CD8-positive, alpha-beta T cell (primary cell): ENCODE measurements at regions of chr16 and their contacts with region 1.

Region 1: DNA sequence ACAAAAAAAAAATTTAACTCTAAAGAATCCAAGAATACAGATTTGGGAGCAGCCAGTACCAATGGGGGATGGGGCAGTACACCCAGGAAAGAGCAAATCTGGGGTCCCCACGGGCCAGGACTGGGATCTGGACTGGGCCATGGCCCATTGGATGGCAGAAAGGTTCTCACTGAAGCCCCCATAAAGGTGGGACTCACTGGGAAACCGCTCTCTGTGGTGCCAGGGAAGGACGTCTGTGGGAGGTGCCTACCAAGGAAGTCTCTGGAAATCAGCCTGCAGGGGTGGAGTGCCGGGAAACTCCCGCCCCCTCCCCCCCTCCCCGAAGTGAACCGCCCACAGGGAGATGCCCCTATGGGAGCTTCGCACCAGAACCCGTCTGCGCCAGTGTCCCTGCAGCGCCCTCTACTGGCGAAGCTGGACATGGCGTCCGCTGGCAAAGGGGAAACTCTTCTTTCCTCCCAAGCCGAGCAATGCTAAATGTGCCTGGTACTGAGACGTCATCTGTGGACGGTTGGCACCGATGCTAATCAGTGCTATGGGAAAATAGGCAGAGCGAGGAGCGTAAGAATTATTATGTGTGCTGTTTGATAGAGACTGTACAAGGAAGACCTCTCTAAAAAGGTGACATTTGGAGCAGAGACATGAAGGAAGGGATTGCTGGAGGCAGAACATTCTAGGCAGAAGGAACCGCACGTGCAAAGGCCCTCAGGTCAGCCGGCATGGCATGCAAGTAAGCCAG is 671.1 kb downstream of the WWOX start:
- DNase-seq: peak; percentile 66 to 87 (median 78)
- ATAC-seq: peak; percentile 78
- H3K4me3 ChIP-seq: no peak overlapping the region
- H3K4me3 Mint-ChIP-seq: no peak overlapping the region
- H3K27ac ChIP-seq: peak overlapping the region in 1 of 2 experiments; percentile 12
- H3K27ac Mint-ChIP-seq: peak overlapping the region; percentile 66
- H3K4me1 ChIP-seq: peaks cover 5% of the 10 kb centered on the region
- H3K4me1 Mint-ChIP-seq: peaks cover 16% of the 10 kb centered on the region
- H3K27me3 ChIP-seq: no peaks in the 10 kb centered on the region
- H3K27me3 Mint-ChIP-seq: peaks cover 3% of the 10 kb centered on the region
- CTCF ChIP-seq: peak; percentile 95

Region 2: DNA sequence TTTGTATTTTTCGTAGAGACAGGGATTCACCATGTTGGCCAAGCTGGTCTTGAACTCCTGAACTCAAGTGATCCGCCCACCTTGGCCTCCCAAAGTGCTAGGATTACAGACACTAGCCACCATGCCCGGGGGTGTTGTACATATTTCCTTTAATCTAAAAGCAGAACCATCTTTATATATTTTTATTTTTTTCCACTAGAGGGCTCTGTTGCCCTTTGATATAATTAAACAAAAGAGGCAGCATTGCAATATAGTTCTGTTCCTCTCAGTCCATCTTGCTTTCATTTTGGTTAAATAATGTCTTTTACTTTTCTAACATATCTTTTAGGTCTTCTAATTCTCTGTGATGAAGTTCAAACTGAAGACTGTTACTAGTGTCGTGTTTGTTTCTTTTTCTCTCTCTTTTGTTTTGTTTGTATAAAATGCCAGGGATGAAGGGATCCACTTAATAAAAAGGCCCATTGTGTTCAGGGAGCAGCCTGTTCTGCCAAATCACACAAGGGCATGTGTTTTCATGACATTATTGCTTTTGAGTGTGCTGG is 647.7 kb before region 1 on chr16:
- CTCF ChIA-PET with region 1: no interaction called
- POLR2A ChIA-PET with region 1: no interaction called
- intact Hi-C with region 1: loop called in 1 of 2 experiments (anchors 1 kb)
- DNase-seq: peak in 3 of 9 experiments; percentile 9 to 63 (median 49)
- ATAC-seq: peak; percentile 49
- H3K4me3 ChIP-seq: no peak overlapping the region
- H3K4me3 Mint-ChIP-seq: no peak overlapping the region
- H3K27ac ChIP-seq: no peak overlapping the region
- H3K27ac Mint-ChIP-seq: no peak overlapping the region
- H3K4me1 ChIP-seq: no peaks in the 10 kb centered on the region
- H3K4me1 Mint-ChIP-seq: peaks cover 3% of the 10 kb centered on the region
- H3K27me3 ChIP-seq: no peaks in the 10 kb centered on the region
- H3K27me3 Mint-ChIP-seq: no peaks in the 10 kb centered on the region
- CTCF ChIP-seq: peak; percentile 70

Region 3: GRCh38 chr16:78503602-78504001 is 266.9 kb before region 1 on chr16:
- CTCF ChIA-PET with region 1: interaction called, 4 read pairs
- POLR2A ChIA-PET with region 1: no interaction called
- intact Hi-C with region 1: loop called in 1 of 2 experiments (anchors 1 kb)
- DNase-seq: peak in 5 of 9 experiments; percentile 16 to 65 (median 38)
- ATAC-seq: no peak
- H3K4me3 ChIP-seq: no peak overlapping the region
- H3K4me3 Mint-ChIP-seq: no peak overlapping the region
- H3K27ac ChIP-seq: no peak overlapping the region
- H3K27ac Mint-ChIP-seq: no peak overlapping the region
- H3K4me1 ChIP-seq: no peaks in the 10 kb centered on the region
- H3K4me1 Mint-ChIP-seq: no peaks in the 10 kb centered on the region
- H3K27me3 ChIP-seq: no peaks in the 10 kb centered on the region
- H3K27me3 Mint-ChIP-seq: no peaks in the 10 kb centered on the region
- CTCF ChIP-seq: peak; percentile 78

Region 4: DNA sequence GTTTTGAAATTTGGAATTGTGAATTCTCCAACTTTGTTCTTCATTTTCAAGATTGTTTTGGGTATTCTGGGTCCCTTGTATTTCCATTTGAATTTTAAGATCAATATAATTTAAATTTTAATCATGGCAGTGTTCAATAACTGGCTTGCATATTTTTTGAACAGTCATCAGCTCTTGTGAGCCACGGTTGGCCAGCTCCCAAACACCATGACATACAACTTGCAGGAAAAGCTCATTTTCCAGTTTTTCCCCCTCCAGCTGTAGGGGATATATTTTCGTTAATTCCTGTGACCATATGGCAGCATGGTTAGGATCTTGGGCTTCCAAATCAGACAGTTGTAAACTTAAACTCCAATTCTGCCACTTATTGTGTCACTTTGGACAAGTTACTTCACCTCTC is 19.0 kb after region 1 on chr16:
- CTCF ChIA-PET with region 1: no interaction called
- POLR2A ChIA-PET with region 1: no interaction called
- intact Hi-C with region 1: no loop called
- DNase-seq: no peak
- ATAC-seq: no peak
- H3K4me3 ChIP-seq: no peak overlapping the region
- H3K4me3 Mint-ChIP-seq: no peak overlapping the region
- H3K27ac ChIP-seq: no peak overlapping the region
- H3K27ac Mint-ChIP-seq: no peak overlapping the region
- H3K4me1 ChIP-seq: no peaks in the 10 kb centered on the region
- H3K4me1 Mint-ChIP-seq: peaks cover 6% of the 10 kb centered on the region
- H3K27me3 ChIP-seq: no peaks in the 10 kb centered on the region
- H3K27me3 Mint-ChIP-seq: no peaks in the 10 kb centered on the region
- CTCF ChIP-seq: no peak